Activated T-helper 1 cell treated with anti-CD3 and anti-CD28 coated beads, Interleukin-12 subunit alpha, Interleukin-12 subunit beta, Interleukin-2, Interleukin-4 antibody, amounts not matched to agents 30 ng/mL and 10 ng/mL and 1 ng/mL, durations not matched to agents 14 hours and 24 hours and 36 hours (primary cell): ENCODE measurements at regions of chr6 and their contacts with region 1.

Region 1: GRCh38 chr6:53484476-53485280 is 60.2 kb downstream of the GCLC start:
- DNase-seq: peak; percentile 32
- H3K4me3 Mint-ChIP-seq: no peak overlapping the region
- H3K27ac Mint-ChIP-seq: no peak overlapping the region
- H3K4me1 Mint-ChIP-seq: peaks cover 30% of the 10 kb centered on the region
- H3K27me3 Mint-ChIP-seq: peaks cover 27% of the 10 kb centered on the region

Region 2: DNA sequence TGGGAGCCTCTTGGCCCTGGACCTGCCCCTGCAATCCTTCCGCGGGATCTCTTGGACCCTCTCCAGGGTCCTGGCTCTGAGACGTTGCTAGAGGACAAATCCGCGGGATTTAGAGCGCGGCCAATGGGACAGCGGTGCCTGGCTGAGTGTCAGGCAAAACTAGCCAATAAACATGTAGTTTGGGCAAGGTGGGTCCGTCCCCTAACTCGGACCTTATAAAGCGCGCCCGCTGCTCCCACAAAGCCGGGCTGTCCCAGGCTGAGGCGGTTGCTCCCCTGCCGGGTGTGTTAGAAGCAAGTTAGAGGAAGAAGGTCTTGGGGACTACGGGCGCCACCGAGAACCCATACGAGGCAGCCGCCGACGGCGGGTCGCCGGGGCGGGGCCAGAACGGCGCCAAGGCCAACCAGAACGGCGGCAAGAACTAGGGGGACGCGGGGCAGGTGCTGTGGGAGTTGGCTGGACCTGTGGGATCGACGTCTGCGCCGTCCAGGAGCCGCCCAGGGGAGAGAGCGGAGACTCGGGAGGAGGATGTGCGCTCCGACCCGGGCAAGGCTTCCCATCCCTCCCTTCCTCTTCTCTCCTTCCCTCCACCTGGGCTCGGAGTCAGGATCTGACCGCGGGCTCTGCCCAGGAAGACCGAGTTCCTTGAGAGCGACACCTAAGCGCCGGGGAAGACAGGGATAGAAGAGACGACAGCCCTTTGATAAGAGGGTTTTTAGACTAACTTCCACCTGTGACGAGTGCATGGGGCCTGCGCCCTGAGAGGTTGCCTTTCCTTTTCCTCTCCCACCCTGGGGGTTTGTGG is 820.3 kb before region 1 on chr6:
- intact Hi-C with region 1: loop called (anchors 10 kb)
- DNase-seq: peak; percentile 68
- H3K4me3 Mint-ChIP-seq: no peak overlapping the region
- H3K27ac Mint-ChIP-seq: no peak overlapping the region
- H3K4me1 Mint-ChIP-seq: peaks cover 10% of the 10 kb centered on the region
- H3K27me3 Mint-ChIP-seq: no peaks in the 10 kb centered on the region

Region 3: DNA sequence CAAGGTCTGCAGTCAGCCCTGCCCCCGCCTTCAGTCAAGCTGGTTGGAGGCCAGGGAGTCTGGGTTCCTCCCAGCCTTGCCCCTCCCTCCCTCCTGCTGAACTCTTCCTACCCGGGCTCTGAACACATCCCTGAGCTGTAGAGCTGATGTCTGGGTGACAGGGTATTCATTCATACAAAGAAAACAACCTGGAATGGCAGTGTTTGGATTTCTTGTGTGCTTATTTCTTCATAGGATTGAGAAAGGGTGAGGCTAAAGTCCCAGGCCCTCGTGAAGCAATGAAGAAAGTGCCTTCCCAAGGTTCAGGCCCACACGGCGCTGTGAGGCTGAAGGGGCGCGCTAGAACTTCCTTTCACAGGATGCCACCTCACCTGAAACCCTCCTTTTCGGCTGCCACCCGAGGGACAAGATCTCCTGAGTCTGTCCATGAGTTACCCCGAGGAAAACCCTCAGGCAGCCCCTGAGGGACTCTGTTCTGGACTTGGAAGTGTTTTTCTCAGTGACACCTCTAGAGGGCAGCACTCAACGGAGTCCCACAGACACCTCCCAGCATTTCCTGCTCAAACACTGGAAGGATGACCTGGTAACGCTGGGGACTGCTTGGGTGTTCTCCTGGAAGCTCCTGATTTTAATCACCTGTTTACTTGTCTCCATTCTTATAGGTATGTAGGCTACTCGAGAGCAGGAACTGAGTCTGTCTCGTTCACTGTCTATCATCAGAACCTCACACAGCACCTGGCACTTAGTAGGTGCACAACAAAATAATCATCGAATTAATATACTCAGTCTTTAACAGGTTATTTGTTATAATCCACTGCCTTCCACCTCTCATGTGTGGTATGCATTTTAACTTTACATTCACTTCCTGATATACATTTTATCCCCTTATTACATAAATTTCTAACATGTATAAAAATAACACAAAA is 669.2 kb before region 1 on chr6:
- intact Hi-C with region 1: loop called (anchors 10 kb)
- DNase-seq: peak; percentile 3
- H3K4me3 Mint-ChIP-seq: no peak overlapping the region
- H3K27ac Mint-ChIP-seq: no peak overlapping the region
- H3K4me1 Mint-ChIP-seq: no peaks in the 10 kb centered on the region
- H3K27me3 Mint-ChIP-seq: peaks cover 5% of the 10 kb centered on the region

Region 4: DNA sequence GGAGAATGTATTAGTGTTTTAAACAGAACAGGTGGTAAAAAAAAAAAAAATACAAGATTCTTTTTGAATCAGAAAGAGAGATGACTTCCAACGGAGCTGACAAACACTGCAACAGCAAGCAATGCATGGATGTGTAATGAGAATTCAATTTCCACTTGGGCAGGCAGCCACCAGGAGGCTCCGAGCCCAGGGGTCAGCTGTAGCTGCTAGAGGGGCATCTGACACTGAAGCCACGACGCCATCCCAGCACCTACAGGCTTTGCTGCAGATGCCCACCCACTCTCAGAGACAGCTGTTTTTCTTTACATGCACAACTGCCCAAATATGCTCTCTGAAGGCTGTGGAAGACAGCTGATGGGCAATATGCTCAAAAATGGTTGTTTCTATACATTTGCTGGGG is 211.3 kb before region 1 on chr6:
- intact Hi-C with region 1: loop called (anchors 10 kb)
- DNase-seq: no peak
- H3K4me3 Mint-ChIP-seq: no peak overlapping the region
- H3K27ac Mint-ChIP-seq: no peak overlapping the region
- H3K4me1 Mint-ChIP-seq: peaks cover 6% of the 10 kb centered on the region
- H3K27me3 Mint-ChIP-seq: no peaks in the 10 kb centered on the region

Region 5: DNA sequence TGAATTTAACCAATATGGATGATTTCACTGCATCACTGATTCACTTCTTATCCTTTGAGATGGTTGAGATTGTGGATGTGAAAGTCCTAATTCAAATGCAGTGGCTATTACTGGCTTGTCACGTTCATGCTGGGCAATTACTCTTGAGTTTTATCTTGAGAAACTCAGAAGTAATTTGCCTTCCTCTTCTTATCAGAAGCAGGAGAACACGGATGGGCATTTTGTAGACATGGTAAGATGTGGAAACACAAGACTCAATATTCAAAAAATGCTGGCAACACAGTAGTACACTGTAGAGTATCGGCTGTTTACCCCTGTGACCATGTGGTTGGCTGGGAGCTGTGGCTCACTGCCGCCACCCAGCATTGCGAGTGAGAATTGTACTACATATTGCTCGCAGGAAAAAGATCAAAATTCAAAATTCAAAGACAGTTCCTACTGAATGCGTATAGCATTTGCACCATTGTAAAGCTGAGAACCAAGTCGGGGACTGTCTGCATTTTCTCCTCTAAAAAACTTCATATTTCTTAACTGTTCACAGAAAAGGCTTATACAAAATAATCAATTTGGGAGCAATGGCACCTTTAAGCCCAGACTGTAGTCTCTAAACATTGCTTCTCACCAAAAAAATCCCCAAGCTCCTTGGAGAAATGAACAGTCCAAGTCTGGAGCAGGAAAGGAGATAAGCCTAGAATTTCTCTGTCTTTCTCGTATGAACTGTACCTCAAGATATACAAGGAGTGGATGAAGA is 74.0 kb before region 1 on chr6:
- intact Hi-C with region 1: loop called (anchors 1 kb)
- DNase-seq: peak; percentile 32
- H3K4me3 Mint-ChIP-seq: no peak overlapping the region
- H3K27ac Mint-ChIP-seq: no peak overlapping the region
- H3K4me1 Mint-ChIP-seq: no peaks in the 10 kb centered on the region
- H3K27me3 Mint-ChIP-seq: peaks cover 2% of the 10 kb centered on the region